K562 (cell line): ENCODE measurements at regions of chr15 and their contacts with region 1.

Region 1: DNA sequence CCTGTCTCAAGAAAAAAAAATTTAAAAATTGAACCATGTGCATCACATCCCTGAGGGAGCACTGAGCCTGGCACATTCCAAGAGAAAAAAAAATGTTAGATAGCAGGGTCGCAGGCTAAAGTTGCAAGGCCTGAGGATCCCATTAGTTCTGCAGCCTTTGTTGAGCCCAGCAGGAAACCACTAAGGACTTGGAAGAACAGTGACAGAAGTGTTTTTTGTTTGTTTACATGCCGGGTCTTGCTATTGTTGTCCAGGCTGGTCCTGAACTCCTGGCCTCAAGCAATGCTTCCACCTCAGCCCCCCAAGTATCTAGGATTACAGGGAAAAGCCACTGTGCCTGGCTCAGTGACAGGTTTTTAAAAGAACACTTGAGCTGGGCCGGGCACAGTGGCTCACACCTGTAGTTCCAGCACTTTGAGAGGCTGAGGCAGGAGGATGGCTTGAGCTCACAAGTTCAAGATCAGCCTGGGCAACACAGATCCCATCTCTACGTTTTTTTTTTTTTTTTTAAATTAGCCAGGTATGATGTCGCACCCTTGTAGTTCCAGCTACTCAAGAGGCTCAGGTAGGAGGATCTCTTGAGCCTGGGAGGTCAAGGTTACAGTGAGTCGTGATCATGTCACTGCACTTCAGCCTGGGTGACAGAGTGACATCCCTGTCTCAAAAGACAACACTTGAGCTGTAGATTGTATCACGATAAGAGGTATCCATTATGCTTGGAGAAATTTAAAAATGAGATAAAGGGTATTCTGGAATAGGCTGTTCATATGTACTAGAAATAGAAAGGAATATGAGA is 15.2 kb downstream of the CHAC1 start:
- DNase-seq: no peak
- ATAC-seq: no peak
- H3K4me3 ChIP-seq: no peak overlapping the region
- H3K27ac ChIP-seq: no peak overlapping the region
- H3K4me1 ChIP-seq: peaks cover 0 to 11% of the 10 kb centered on the region in 2 experiments; a peak in 3 of 5 replicates
- H3K27me3 ChIP-seq: no peaks in the 10 kb centered on the region; a peak in 1 of 5 replicates
- CTCF ChIP-seq: no peak
- EP300 ChIP-seq: no peak
- POLR2A ChIP-seq: no peak
- RAD21 ChIP-seq: no peak

Region 2: GRCh38 chr15:40906091-40906990 is 62.1 kb before region 1 on chr15:
- CTCF ChIA-PET with region 1: interaction called, 3 read pairs
- POLR2A ChIA-PET with region 1: no interaction called
- in situ Hi-C with region 1: no loop called
- intact Hi-C with region 1: loop called (anchors 5 kb)
- DNase-seq: peak; percentile 90 to 96 (median 94)
- ATAC-seq: peak; percentile 99
- H3K4me3 ChIP-seq: peak overlapping the region; percentile 34
- H3K27ac ChIP-seq: peak overlapping the region; percentile 52; the same call in 2 of the 3 replicates
- H3K4me1 ChIP-seq: peaks cover 11 to 27% of the 10 kb centered on the region in 2 experiments; a peak in 4 of 5 replicates
- H3K27me3 ChIP-seq: no peaks in the 10 kb centered on the region
- CTCF ChIP-seq: peak; percentile 87 to 96 (median 95)
- EP300 ChIP-seq: no peak
- POLR2A ChIP-seq: 0 out of 2 replicates have a peak, but pooled peaks have one; percentile 32
- RAD21 ChIP-seq: peak; percentile 82 to 87

Region 3: GRCh38 chr15:40952901-40953712 is 15.4 kb before region 1 on chr15 and contains the start of gene CHAC1:
- CTCF ChIA-PET with region 1: no interaction called
- POLR2A ChIA-PET with region 1: interaction called, 16 read pairs
- in situ Hi-C with region 1: no loop called
- intact Hi-C with region 1: no loop called
- DNase-seq: peak; percentile 91 to 98 (median 95)
- ATAC-seq: peak; percentile 83
- H3K4me3 ChIP-seq: peak within 1 kb of the TSS; percentile 61
- H3K27ac ChIP-seq: peak within 1 kb of the TSS; percentile 70
- H3K4me1 ChIP-seq: peaks cover 16 to 35% of the 10 kb centered on the region in 2 experiments; a peak in 4 of 5 replicates
- H3K27me3 ChIP-seq: no peaks in the 10 kb centered on the region; a peak in 1 of 5 replicates
- CTCF ChIP-seq: no peak
- EP300 ChIP-seq: peak; percentile 42
- POLR2A ChIP-seq: peak; percentile 67; the same call in 1 of the 2 replicates
- RAD21 ChIP-seq: no peak
- polyA plus RNA-seq, gene CHAC1: 2.5 to 4.4 TPM